CD8-positive, alpha-beta memory T cell (primary cell): ENCODE measurements at regions of chr7 and their contacts with region 1.

Region 1: DNA sequence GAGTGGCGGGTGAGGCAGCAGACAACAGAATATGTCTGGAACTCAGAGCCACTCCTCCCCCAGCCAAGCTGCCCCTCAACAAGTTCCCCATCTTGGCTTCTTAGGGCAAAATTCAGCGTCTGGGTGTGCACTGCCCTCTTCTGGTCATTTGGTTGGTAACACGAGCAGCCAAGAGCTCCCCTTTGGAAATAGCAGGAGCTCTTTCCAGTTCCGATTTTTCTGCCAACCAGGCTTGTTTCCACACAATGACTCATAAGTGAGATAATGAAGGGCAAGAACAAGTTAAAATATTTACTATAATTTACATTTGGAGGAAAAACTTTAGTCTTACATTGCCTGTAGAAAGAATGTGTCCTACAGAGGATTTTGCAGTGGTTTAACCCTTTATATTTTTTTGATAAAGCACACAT is 70.5 kb downstream of the ADCYAP1R1 start:
- DNase-seq: no peak
- H3K4me3 ChIP-seq: no peak overlapping the region
- H3K4me3 Mint-ChIP-seq: no peak overlapping the region
- H3K27ac ChIP-seq: no peak overlapping the region
- H3K27ac Mint-ChIP-seq: no peak overlapping the region
- H3K4me1 ChIP-seq: no peaks in the 10 kb centered on the region
- H3K4me1 Mint-ChIP-seq: no peaks in the 10 kb centered on the region
- H3K27me3 ChIP-seq: no peaks in the 10 kb centered on the region
- H3K27me3 Mint-ChIP-seq: peaks cover 6 to 15% of the 10 kb centered on the region in 2 donors

Region 2: GRCh38 chr7:30975256-30975899 is 147.3 kb before region 1 on chr7:
- CTCF ChIA-PET with region 1: no interaction called
- POLR2A ChIA-PET with region 1: no interaction called
- DNase-seq: no peak
- H3K4me3 ChIP-seq: no peak overlapping the region
- H3K4me3 Mint-ChIP-seq: no peak overlapping the region
- H3K27ac ChIP-seq: no peak overlapping the region
- H3K27ac Mint-ChIP-seq: peak overlapping the region in 1 of 8 donors; percentile 59
- H3K4me1 ChIP-seq: no peaks in the 10 kb centered on the region
- H3K4me1 Mint-ChIP-seq: peaks cover 0 to 4% (median 0%) of the 10 kb centered on the region in 3 donors
- H3K27me3 ChIP-seq: no peaks in the 10 kb centered on the region
- H3K27me3 Mint-ChIP-seq: peaks cover 10 to 59% of the 10 kb centered on the region in 2 donors

Region 3: DNA sequence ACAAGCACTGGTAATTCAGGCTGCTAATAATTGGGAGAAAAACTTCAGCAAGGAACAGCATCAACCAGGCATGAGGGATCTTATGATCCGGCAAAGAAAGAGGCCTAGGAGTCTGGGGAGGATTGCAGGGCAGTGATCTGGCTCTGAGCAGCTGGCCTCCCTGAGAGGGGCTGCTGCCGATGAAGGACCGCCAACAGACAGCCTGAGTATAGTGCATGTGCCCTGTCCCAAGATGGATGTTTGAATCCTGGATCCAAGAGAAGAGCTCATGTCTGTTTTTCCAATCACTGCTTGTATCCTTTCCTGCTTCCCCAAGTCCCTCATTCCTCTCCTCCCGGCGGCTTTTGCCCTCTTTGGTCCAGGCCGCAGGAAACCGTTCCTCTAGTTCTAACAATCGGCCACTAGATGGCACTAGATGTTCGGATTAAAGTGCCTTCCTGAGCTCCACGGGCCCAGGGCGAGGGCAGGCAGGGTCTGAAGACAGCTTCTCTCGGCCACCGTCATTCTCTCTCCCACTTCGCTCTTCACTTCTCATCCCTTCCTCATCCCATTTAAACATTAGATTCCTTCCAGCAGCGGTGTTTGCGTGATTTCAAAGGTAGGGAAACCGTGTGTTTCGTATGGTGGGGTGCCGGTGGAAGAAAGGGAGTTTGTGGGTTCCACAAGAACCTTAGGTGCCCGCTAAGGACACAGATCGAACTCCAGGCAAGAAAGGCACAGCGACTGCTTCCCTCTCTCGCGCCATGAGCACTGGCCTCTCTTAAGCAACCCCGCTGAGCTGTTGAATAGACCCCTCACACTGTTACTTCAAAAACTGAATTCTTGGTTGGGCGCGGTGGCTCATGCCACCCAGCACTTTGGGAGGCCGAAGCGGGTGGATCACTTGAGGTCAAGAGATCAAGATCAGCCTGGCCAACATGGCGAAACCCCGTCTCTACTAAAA is 11.9 kb after region 1 on chr7:
- CTCF ChIA-PET with region 1: interaction called, 17 read pairs
- POLR2A ChIA-PET with region 1: no interaction called
- DNase-seq: peak in 3 of 5 donors; percentile 11 to 16 (median 12)
- H3K4me3 ChIP-seq: no peak overlapping the region
- H3K4me3 Mint-ChIP-seq: no peak overlapping the region
- H3K27ac ChIP-seq: no peak overlapping the region
- H3K27ac Mint-ChIP-seq: peak overlapping the region in 1 of 8 donors; percentile 63
- H3K4me1 ChIP-seq: no peaks in the 10 kb centered on the region
- H3K4me1 Mint-ChIP-seq: peaks cover 0 to 7% (median 5%) of the 10 kb centered on the region in 3 donors
- H3K27me3 ChIP-seq: no peaks in the 10 kb centered on the region
- H3K27me3 Mint-ChIP-seq: peaks cover 2 to 8% of the 10 kb centered on the region in 2 donors